PC-9 (cell line): ENCODE measurements at regions of chr13 and their contacts with region 1.

Region 1: GRCh38 chr13:20264271-20265018 is 32.3 kb upstream of the GJB6 start:
- DNase-seq: no peak
- H3K4me3 ChIP-seq: no peak overlapping the region
- H3K27ac ChIP-seq: no peak overlapping the region
- H3K4me1 ChIP-seq: 0 out of 2 replicates have a peak, but pooled peaks cover 4% of the 10 kb centered on the region
- H3K27me3 ChIP-seq: no peaks in the 10 kb centered on the region
- CTCF ChIP-seq: no peak

Region 2: DNA sequence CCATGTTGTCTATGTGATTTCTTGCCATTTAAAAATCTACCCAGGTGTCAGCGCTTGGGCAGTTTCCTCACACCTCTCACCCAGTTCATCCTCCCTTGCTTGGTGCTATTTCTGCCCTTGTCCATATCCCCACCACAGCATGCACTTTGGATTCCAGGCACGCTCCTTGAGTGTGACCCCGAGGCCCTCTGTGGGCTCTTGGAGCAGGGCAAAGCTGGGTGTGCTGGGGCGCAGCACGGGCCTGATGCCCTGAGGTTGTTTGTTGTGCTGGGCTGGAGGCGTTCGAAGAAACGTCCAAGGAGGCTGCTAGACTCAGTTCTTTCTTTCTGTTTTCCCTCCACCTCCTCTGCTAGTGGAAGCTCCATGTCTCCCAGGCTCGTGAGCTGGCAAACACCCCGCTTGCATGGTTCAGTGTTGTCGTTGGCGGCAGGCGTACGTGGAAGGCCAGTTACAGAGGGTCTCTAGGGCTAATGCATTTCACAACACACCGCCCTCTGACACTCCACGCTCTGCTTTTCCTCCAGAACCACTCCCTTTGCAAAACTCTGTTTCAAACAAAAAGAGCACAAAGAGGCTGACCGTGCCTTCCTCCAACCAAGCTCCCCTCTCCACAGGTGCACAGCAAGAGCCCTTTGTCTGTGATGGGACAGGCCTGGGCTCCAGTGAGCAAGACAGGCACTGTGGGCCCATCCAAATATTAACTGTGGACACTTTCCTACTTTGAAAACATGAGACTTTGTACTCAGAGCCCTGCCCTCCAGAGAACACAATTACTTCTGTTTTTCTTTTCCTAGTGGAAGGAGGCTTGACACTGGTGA is 85.3 kb after region 1 on chr13:
- CTCF ChIA-PET with region 1: no interaction called
- POLR2A ChIA-PET with region 1: interaction called, 11 read pairs
- intact Hi-C with region 1: no loop called
- DNase-seq: no peak
- H3K4me3 ChIP-seq: no peak overlapping the region
- H3K27ac ChIP-seq: no peak overlapping the region
- H3K4me1 ChIP-seq: peaks cover 25% of the 10 kb centered on the region
- H3K27me3 ChIP-seq: no peaks in the 10 kb centered on the region
- CTCF ChIP-seq: no peak